Activated naive CD4-positive, alpha-beta T cell treated with anti-CD3 and anti-CD28 coated beads for 36 hours (primary cell): ENCODE measurements at regions of chr12 and their contacts with region 1.

Region 1: DNA sequence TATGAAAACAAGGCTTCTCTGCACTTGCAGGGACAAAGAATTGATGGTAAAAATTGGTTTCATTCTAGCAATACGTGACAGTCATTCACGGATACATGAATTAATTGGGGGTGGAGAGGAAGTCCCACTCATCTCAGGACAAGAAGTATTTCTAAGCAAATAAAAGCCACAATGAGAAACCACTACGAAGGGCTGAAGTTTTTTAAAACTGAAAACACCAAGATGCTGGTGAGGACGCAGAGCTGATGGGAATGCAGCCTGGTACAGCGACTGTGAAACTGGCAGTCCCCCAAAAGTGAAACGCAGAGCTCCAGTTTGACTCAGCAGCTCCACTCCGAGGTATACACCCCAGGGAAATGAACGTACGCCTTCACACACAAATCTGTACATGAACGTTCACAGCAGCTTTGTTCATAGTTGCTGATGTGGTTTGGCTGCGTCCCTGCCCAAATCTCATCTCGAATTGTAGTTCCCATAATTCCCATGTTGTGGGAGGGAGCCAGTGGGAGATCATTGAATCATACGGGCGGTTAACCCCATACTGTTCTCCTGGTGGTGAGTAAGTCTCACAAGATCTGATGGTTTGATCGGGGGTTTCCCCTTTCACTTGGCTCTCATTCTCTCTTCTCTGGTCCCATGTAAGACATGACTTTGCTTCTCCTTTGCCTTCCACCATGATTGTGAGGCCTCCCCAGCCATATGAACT is 89.0 kb downstream of the SCARB1 start:
- DNase-seq: peak; percentile 96
- H3K4me3 Mint-ChIP-seq: no peak overlapping the region
- H3K27ac Mint-ChIP-seq: peak overlapping the region; percentile 93
- H3K4me1 Mint-ChIP-seq: peaks cover 40% of the 10 kb centered on the region
- H3K27me3 Mint-ChIP-seq: peaks cover 15% of the 10 kb centered on the region

Region 2: DNA sequence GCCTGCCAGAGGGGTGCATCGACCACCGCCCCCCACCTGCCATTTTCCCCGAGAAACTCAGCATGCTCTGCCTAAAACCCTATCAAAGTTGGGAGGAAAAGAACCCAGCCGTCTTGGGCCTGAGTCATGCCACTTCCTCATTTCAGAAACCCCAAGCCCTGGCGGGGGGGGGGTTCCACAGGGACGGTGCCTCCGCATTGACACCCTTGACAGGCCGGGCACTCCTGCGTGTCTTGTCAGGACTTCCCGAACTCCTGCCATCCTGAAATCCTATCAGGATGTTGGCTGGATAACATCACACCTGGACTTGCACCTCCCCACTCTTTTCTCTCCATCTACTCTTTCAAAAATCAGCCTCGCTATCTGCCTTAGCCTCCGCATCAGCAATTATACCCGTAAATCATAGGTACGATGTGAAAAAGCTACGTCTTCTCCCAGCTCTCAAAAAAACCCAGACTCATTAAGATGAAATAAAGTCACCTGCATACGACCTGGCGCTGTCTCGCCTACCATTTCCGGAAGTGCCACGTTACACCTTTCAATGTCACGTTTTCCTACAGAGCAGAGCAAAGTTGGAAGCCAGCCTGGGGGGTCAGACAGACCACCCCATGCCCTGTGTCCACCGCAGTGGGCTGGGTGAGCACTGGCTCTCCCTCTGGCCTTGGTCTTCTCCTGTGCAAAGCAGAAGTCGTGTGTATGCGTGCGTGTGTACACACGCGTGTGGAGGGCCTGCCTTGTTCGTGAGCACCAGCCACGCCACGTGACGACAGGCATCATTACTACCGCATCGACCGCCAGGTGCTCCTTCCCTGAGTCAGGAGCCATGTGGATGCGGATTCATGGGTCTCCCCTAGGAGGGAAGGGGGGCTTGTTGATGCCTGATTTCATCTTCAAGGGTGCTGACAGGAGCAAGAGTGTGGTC is 383.0 kb before region 1 on chr12:
- CTCF ChIA-PET with region 1: interaction called, 3 read pairs
- intact Hi-C with region 1: loop called (anchors 1 kb)
- DNase-seq: peak; percentile 77
- H3K4me3 Mint-ChIP-seq: peak overlapping the region; percentile 16
- H3K27ac Mint-ChIP-seq: peak overlapping the region; percentile 88
- H3K4me1 Mint-ChIP-seq: peaks cover 34% of the 10 kb centered on the region
- H3K27me3 Mint-ChIP-seq: no peaks in the 10 kb centered on the region

Region 3: DNA sequence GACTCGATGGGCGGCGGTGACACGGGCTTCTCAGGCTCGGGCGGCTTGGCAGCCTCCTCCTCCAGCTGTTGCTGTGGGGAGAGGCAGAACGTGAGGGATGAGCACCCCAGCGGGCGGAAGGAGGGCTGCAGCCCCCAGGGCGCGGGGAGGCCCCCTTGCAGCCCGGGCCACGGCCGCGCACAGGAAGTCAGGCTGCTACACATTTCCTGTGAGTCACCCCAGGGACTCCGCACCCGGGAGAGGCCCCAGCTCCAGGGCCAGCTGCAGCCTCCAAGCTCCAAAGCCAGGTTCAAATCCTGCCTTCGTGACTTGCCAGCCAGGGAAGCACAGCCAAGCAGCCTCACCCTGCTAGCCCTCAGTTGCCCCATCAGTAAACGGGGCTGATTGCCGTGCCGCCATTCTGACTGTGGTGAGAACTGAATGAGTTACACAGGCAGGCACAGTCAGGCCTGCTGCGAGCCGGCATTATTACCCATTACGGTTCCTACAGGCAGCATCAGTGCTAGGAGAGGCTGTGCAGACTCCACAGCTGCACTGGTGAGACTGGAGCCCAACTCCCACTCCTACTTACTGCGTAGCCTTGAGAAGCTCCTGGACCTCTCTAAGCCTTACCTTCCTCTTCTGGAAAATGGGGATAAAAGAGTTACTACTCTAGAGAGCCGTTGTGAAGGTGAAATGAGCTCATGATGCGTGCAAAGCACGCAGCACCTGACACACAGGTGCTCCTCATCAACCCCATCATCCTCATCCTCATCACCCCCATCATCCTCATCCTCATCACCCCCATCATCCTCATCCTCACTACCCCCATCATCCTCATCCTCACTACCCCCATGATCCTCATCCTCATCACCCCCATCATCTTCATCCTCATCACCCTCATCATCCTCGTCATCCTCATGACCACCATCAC is 308.1 kb before region 1 on chr12:
- CTCF ChIA-PET with region 1: no interaction called
- intact Hi-C with region 1: loop called (anchors 1 kb)
- DNase-seq: peak; percentile 93
- H3K4me3 Mint-ChIP-seq: peak overlapping the region; percentile 21
- H3K27ac Mint-ChIP-seq: peak overlapping the region; percentile 56
- H3K4me1 Mint-ChIP-seq: peaks cover 27% of the 10 kb centered on the region
- H3K27me3 Mint-ChIP-seq: no peaks in the 10 kb centered on the region

Region 4: GRCh38 chr12:124713436-124714082 is 61.1 kb before region 1 on chr12:
- CTCF ChIA-PET with region 1: interaction called, 3 read pairs
- intact Hi-C with region 1: loop called (anchors 1 kb)
- DNase-seq: peak; percentile 92
- H3K4me3 Mint-ChIP-seq: peak overlapping the region; percentile 0
- H3K27ac Mint-ChIP-seq: peak overlapping the region; percentile 64
- H3K4me1 Mint-ChIP-seq: peaks cover 21% of the 10 kb centered on the region
- H3K27me3 Mint-ChIP-seq: no peaks in the 10 kb centered on the region

Region 5: DNA sequence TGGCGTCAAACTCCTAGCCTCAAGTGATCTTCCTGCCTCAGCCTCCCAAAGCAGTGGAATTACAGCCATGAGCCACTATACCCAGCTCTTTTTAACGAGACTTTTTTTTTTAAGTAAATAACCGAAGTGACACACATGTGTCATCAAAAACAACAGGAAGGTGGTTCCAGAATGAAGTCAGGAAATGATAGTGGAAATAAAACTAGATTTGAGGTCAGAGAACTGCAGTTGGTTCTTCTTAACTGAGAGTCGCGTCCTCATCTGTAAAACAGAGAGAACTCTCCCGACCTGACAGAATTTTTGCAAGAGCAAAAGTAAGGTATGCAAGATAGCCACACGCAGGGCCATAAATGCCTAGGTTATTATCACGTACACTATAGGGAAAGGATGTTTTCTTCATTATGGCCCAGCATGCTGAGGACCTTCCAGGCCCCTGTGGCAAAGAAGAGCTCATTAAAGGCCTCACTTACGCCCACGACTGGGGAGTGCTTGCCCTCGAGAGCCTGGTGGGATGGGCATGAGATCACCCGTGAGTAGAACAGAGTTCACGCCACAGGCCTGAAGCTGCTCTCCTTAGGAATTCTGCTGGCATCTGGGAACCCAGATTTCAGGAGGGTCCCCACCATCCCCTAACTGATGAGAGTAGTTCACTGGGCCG is 21.8 kb after region 1 on chr12:
- CTCF ChIA-PET with region 1: no interaction called
- intact Hi-C with region 1: loop called (anchors 1 kb)
- DNase-seq: no peak
- H3K4me3 Mint-ChIP-seq: no peak overlapping the region
- H3K27ac Mint-ChIP-seq: no peak overlapping the region
- H3K4me1 Mint-ChIP-seq: peaks cover 13% of the 10 kb centered on the region
- H3K27me3 Mint-ChIP-seq: no peaks in the 10 kb centered on the region

Region 6: GRCh38 chr12:124917135-124917840 is 142.7 kb after region 1 on chr12:
- CTCF ChIA-PET with region 1: no interaction called
- intact Hi-C with region 1: loop called (anchors 1 kb)
- DNase-seq: peak; percentile 98
- H3K4me3 Mint-ChIP-seq: peak overlapping the region; percentile 73
- H3K27ac Mint-ChIP-seq: peak overlapping the region; percentile 100
- H3K4me1 Mint-ChIP-seq: peaks cover 83% of the 10 kb centered on the region
- H3K27me3 Mint-ChIP-seq: peaks cover 6% of the 10 kb centered on the region

Region 7: DNA sequence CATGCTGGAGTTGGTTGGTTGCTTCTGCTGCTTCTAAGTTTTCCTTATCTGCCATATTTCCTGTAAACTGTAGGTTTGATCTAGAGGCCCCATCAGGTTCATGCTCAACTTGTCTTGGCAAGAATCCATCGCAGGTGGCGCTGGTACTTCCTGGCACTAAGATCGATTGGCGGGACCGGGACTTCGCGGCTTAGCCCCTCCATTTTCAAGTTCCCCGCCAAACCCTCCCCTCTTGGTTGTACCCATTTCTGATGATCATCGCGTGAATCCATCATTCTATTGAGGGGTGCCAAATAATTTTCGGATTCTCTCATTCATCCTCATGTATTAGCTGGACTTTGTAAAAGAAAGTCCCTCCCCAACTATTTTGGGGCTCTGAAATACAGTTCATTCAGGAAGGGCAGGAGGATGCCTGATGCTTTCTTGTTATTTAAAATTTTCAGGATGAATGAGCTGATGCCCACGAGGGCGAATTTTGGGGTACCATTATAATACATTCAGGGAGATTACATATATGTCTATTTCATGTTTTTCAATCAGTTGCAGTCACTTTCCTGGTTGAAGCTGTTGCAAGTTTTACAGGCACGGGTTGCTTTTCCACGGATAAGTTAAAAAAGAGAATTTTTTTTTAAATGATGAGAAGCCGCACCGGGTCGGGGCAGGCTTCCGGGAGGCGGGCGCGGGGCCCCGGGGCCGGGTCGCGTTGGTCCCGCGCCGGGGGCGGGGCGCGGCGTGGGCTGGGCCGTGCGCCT is 218.4 kb after region 1 on chr12:
- CTCF ChIA-PET with region 1: no interaction called
- intact Hi-C with region 1: loop called (anchors 1 kb)
- DNase-seq: peak; percentile 97
- H3K4me3 Mint-ChIP-seq: peak overlapping the region; percentile 74
- H3K27ac Mint-ChIP-seq: peak overlapping the region; percentile 94
- H3K4me1 Mint-ChIP-seq: peaks cover 25% of the 10 kb centered on the region
- H3K27me3 Mint-ChIP-seq: no peaks in the 10 kb centered on the region